IMR-90 (cell line): ENCODE measurements at regions of chr15 and their contacts with region 1.

Region 1: GRCh38 chr15:57561041-57561711 is 30.5 kb upstream of the MYZAP start:
- DNase-seq: peak; percentile 65
- ATAC-seq: peak; percentile 100
- H3K4me3 ChIP-seq: no peak overlapping the region
- H3K27ac ChIP-seq: no peak overlapping the region
- H3K4me1 ChIP-seq: no peaks in the 10 kb centered on the region
- H3K27me3 ChIP-seq: peaks cover 18% of the 10 kb centered on the region
- CTCF ChIP-seq: peak; percentile 81
- POLR2A ChIP-seq: no peak
- RAD21 ChIP-seq: peak; percentile 68

Region 2: DNA sequence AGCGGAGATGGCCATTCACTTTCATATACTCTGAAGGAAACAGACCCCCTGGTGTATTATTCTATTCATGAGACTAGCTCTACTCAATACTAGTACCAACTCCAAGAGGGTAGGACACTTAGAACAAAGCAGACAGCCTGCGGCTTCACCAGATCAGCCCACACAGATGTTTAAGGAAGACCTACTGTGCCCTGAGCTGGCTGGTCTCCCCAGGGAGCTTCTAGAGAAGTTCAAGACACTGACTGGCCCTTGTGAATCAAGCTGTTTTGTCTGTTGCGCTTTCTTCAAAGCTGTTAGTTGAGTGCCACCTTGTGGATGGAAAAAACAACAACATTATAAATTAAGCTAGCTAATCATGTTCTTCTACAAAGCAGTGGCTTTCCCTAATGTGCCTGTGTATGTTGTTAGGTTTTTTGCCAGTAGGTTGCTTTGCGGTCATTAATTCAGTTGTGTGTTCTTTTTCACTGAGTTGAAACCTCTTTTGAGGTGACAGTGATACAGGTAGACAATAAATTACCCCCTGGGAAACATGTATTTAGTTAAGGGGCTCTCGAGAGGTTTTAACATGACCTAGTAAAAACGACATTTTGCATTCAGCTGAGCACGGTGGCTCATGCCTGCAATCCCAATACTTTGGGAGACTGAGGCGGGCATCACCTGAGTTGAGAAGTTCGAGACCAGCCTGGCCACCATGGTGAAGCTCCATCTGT is 33.6 kb before region 1 on chr15:
- CTCF ChIA-PET with region 1: no interaction called
- POLR2A ChIA-PET with region 1: no interaction called
- dilution Hi-C with region 1: no loop called
- in situ Hi-C with region 1: no loop called
- intact Hi-C with region 1: no loop called
- DNase-seq: peak; percentile 88
- ATAC-seq: peak; percentile 83
- H3K4me3 ChIP-seq: no peak overlapping the region
- H3K27ac ChIP-seq: no peak overlapping the region
- H3K4me1 ChIP-seq: no peaks in the 10 kb centered on the region
- H3K27me3 ChIP-seq: peaks cover 39% of the 10 kb centered on the region
- CTCF ChIP-seq: peak; percentile 78
- POLR2A ChIP-seq: no peak
- RAD21 ChIP-seq: peak; percentile 92

Region 3: DNA sequence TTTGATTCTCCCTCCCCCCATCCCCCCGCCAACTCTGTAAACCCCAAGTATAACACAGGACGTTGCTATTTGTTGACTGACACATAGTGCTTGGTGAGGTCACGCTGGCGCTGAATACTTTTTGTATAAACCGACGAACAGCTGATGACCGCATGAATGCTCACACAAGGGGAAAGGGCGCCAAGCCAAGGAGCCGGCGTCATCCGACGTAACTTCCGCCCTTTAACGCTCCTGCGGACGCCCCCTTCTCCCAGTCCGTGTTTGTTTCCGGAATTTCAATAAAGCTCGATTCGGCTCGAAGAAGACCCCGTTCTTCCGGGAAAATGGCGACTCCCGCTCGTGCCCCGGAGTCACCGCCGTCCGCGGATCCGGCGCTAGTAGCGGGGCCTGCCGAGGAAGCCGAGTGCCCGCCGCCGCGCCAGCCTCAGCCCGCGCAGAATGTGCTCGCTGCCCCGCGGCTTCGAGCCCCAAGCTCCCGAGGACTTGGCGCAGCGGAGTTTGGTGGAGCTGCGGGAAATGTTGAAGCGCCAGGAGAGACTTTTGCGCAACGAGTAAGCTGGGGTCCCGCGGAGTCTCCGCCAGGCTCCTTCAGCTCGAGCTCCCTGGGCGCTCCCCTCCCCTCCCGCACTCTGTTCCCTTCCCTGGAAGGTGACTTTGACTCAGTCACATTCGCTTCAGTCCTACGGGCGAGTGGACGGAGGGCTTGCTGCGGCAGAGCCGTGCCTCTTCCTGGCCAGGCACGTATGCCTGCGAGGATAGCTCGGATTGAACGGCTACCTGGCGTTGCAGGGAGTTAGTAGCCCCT is 145.4 kb after region 1 on chr15 and contains the start of gene POLR2M:
- CTCF ChIA-PET with region 1: no interaction called
- POLR2A ChIA-PET with region 1: no interaction called
- dilution Hi-C with region 1: no loop called
- in situ Hi-C with region 1: no loop called
- intact Hi-C with region 1: loop called (anchors 5 kb)
- DNase-seq: peak; percentile 100
- ATAC-seq: peak; percentile 92
- H3K4me3 ChIP-seq: peak within 1 kb of the TSS; percentile 95
- H3K27ac ChIP-seq: peak within 1 kb of the TSS; percentile 94
- H3K4me1 ChIP-seq: no peaks in the 10 kb centered on the region
- H3K27me3 ChIP-seq: no peaks in the 10 kb centered on the region
- CTCF ChIP-seq: no peak
- POLR2A ChIP-seq: peak; percentile 82
- RAD21 ChIP-seq: no peak
- total RNA-seq, gene POLR2M: 83.0 and 117 TPM in 2 replicates

Region 4: GRCh38 chr15:57866149-57866736 is 305.1 kb after region 1 on chr15:
- CTCF ChIA-PET with region 1: interaction called, 3 read pairs
- POLR2A ChIA-PET with region 1: no interaction called
- dilution Hi-C with region 1: no loop called
- in situ Hi-C with region 1: loop called (anchors 10 kb)
- intact Hi-C with region 1: loop called (anchors 1 kb)
- DNase-seq: peak; percentile 15
- ATAC-seq: peak; percentile 68; the same call in 1 of the 2 replicates
- H3K4me3 ChIP-seq: no peak overlapping the region
- H3K27ac ChIP-seq: no peak overlapping the region
- H3K4me1 ChIP-seq: no peaks in the 10 kb centered on the region
- H3K27me3 ChIP-seq: no peaks in the 10 kb centered on the region
- CTCF ChIP-seq: peak; percentile 63
- POLR2A ChIP-seq: no peak
- RAD21 ChIP-seq: peak; percentile 45